ENCODE measurements at regions of chr22 and their contacts with region 1.

Region 1: GRCh38 chr22:25465949-25466348 is 98.5 kb upstream of the GRK3 start:
- DNase-seq: no peak
- ATAC-seq: no peak
- H3K4me3 ChIP-seq: no peak overlapping the region
- H3K4me3 Mint-ChIP-seq: no peak overlapping the region
- H3K27ac ChIP-seq: no peak overlapping the region
- H3K27ac Mint-ChIP-seq: no peak overlapping the region
- H3K4me1 ChIP-seq: no peaks in the 10 kb centered on the region
- H3K4me1 Mint-ChIP-seq: no peaks in the 10 kb centered on the region
- H3K27me3 ChIP-seq: no peaks in the 10 kb centered on the region
- H3K27me3 Mint-ChIP-seq: no peaks in the 10 kb centered on the region
- CTCF ChIP-seq: no peak

Region 2: GRCh38 chr22:25153961-25154666 is 311.8 kb before region 1 on chr22:
- CTCF ChIA-PET with region 1: no interaction called
- POLR2A ChIA-PET with region 1: no interaction called
- intact Hi-C with region 1: no loop called
- DNase-seq: no peak
- ATAC-seq: no peak
- H3K4me3 ChIP-seq: no peak overlapping the region
- H3K4me3 Mint-ChIP-seq: no peak overlapping the region
- H3K27ac ChIP-seq: no peak overlapping the region
- H3K27ac Mint-ChIP-seq: no peak overlapping the region
- H3K4me1 ChIP-seq: no peaks in the 10 kb centered on the region
- H3K4me1 Mint-ChIP-seq: no peaks in the 10 kb centered on the region
- H3K27me3 ChIP-seq: no peaks in the 10 kb centered on the region
- H3K27me3 Mint-ChIP-seq: peaks cover 4% of the 10 kb centered on the region
- CTCF ChIP-seq: no peak

Region 3: DNA sequence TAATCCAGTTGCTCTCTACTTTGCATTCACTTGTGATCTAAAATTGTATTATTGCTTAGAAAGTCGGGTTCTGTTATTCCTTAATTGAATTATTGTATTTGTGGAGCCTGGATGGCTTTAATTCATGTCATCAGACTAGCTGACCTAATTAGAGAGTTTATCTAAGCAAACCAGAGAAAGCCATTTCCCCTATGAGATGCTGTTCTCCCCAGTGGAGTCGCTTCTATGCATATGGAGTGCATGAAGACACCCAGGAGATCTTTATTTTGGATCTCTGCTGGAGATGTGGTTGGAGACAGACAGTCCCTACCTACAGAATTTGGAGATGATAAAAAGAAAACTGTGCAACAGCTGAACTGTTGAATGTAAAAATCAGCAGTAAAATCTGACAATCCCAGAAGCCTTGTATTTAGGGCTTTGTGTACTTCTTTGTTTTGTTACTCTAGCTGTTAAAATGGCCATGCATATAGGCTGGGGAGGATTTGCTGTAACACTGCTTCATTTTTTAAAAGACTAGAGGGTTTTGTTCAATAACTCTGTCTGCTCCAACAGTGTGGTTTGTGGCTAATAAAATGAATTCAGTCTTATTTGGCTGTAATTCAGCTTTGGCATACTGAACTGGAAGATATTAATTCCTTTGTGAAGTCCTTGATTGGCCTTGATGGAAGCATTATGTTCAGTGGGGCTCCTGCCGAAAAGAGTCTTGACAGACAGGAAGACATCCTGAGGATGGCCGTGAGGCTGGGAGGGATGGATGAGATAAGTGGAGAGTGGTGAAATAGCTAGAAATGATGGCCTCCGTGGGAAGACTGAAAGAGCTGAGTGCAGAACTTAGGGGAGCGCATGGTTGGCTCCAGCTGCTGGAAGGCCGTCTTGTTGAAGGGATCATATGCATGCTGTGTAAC is 231.1 kb after region 1 on chr22:
- CTCF ChIA-PET with region 1: interaction called, 51 read pairs
- POLR2A ChIA-PET with region 1: interaction called, 17 read pairs
- intact Hi-C with region 1: no loop called
- DNase-seq: no peak
- ATAC-seq: no peak
- H3K4me3 ChIP-seq: no peak overlapping the region
- H3K4me3 Mint-ChIP-seq: no peak overlapping the region
- H3K27ac ChIP-seq: peak overlapping the region in 1 of 2 donors; percentile 3
- H3K27ac Mint-ChIP-seq: no peak overlapping the region
- H3K4me1 ChIP-seq: no peaks in the 10 kb centered on the region
- H3K4me1 Mint-ChIP-seq: peaks cover 2% of the 10 kb centered on the region
- H3K27me3 ChIP-seq: no peaks in the 10 kb centered on the region
- H3K27me3 Mint-ChIP-seq: no peaks in the 10 kb centered on the region
- CTCF ChIP-seq: no peak

Region 4: DNA sequence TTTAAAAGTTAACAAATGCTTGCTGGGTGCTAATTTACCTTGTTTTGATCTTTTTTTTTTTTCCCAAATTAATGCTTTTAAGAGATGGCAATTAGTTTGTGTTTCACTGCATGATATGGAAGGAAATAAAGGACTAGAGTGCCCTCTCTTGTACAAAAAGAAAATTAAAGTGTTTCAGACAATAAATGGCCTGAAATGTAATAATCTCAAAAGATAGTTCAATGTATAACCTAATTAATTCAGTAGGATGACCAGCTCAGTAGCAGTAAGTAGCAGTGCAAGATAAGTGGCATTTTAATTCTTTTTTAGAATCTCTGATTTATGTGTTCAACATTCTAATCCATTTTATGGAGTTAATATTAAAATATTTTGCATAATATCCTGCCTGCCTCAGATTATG is 236.1 kb after region 1 on chr22:
- CTCF ChIA-PET with region 1: interaction called, 51 read pairs
- POLR2A ChIA-PET with region 1: interaction called, 17 read pairs
- intact Hi-C with region 1: no loop called
- DNase-seq: peak; percentile 42
- ATAC-seq: peak; percentile 36
- H3K4me3 ChIP-seq: no peak overlapping the region
- H3K4me3 Mint-ChIP-seq: no peak overlapping the region
- H3K27ac ChIP-seq: no peak overlapping the region
- H3K27ac Mint-ChIP-seq: no peak overlapping the region
- H3K4me1 ChIP-seq: no peaks in the 10 kb centered on the region
- H3K4me1 Mint-ChIP-seq: peaks cover 7% of the 10 kb centered on the region
- H3K27me3 ChIP-seq: no peaks in the 10 kb centered on the region
- H3K27me3 Mint-ChIP-seq: no peaks in the 10 kb centered on the region
- CTCF ChIP-seq: peak; percentile 70

Region 5: DNA sequence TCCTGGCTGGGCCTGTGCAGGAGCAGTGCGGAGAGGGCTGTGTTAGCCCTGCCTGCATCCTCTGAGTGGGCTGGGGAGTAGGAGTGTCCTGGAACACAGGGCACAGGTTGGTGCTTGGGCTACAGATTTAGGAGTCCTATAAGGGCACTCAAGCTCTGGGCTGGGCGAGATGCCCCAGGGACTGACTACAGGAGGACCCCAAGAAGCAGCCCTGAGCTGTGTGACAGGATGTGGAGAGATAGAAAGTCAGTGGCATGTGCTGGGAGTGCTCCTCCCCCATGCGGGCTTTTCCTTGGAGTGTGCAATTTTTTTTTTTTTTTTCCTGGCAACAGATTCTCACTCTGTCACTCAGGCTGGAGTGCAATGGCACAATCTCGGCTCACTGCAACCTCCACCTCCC is 242.4 kb after region 1 on chr22:
- CTCF ChIA-PET with region 1: interaction called, 51 read pairs
- POLR2A ChIA-PET with region 1: no interaction called
- intact Hi-C with region 1: no loop called
- DNase-seq: no peak
- ATAC-seq: no peak
- H3K4me3 ChIP-seq: no peak overlapping the region
- H3K4me3 Mint-ChIP-seq: no peak overlapping the region
- H3K27ac ChIP-seq: no peak overlapping the region
- H3K27ac Mint-ChIP-seq: peak overlapping the region; percentile 20
- H3K4me1 ChIP-seq: no peaks in the 10 kb centered on the region
- H3K4me1 Mint-ChIP-seq: peaks cover 2% of the 10 kb centered on the region
- H3K27me3 ChIP-seq: no peaks in the 10 kb centered on the region
- H3K27me3 Mint-ChIP-seq: no peaks in the 10 kb centered on the region
- CTCF ChIP-seq: no peak

Region 6: DNA sequence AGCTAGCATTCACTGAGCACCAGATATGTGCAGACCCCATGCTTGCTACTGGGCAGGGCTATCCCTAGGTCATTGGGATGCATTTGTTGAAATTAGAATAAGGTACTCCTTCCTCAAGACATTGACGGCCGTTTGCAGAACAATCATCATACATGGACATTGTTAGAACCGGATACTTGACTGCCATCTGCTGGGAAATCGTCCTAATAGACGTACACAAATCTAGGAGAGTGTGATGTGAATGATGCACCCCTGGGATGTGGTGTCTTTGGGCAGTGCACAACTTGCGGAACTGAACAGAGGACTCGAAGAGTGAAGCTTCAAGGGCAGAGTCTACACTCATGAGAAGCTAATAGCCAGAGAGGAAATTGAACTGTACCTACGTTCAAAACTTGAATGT is 311.9 kb after region 1 on chr22:
- CTCF ChIA-PET with region 1: interaction called, 84 read pairs
- POLR2A ChIA-PET with region 1: no interaction called
- intact Hi-C with region 1: no loop called
- DNase-seq: no peak
- ATAC-seq: no peak
- H3K4me3 ChIP-seq: no peak overlapping the region
- H3K4me3 Mint-ChIP-seq: no peak overlapping the region
- H3K27ac ChIP-seq: no peak overlapping the region
- H3K27ac Mint-ChIP-seq: no peak overlapping the region
- H3K4me1 ChIP-seq: peaks cover under 1 to 3% of the 10 kb centered on the region in 2 donors
- H3K4me1 Mint-ChIP-seq: peaks cover 2% of the 10 kb centered on the region
- H3K27me3 ChIP-seq: no peaks in the 10 kb centered on the region
- H3K27me3 Mint-ChIP-seq: peaks cover 13% of the 10 kb centered on the region
- CTCF ChIP-seq: no peak

Region 7: DNA sequence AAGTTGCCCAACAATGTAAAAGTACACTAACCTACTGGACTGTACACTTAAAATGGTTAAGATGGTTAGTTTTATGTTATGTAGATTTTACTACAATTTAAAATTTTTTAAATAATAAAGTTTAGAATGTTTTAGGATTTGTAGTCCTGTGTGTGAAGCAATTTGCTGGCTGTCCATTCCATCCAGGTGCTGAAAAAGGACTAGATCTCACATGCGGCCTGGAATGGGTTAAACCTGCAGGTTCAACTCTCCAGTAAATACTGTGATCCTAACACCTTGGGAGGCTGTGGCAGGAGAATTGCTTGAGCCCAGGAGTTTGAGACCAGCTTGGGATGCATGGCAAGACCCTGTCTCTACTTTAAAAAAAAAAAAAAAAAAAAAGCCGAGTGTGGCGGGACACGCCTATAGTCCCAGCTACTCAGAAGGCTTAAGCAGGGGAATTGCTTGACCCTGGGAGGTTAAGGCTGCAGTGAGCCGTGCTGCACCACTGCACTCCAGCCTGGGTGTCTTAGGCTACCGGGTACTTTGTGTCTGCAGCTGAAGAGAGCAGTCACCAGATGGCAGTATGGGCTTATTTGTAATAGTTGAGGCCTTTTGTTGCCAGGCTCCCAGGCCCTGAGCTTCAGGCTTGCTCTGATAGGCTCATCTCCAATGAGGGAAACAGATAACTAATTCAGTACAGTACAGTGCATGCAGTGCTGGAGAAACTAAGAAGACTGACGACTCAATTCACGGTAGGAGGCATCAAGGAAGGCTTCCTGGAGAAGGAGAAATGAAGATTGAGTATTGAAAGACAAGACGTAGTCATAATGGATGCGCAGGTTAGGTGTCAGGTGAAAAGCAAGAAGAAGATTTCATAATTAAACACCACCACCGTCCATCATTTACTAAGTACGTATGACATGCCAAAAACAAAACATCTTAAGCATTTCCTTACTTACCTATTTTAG is 898.4 kb after region 1 on chr22:
- CTCF ChIA-PET with region 1: no interaction called
- POLR2A ChIA-PET with region 1: no interaction called
- intact Hi-C with region 1: loop called (anchors 1 kb)
- DNase-seq: peak; percentile 77
- ATAC-seq: peak; percentile 78
- H3K4me3 ChIP-seq: no peak overlapping the region
- H3K4me3 Mint-ChIP-seq: no peak overlapping the region
- H3K27ac ChIP-seq: no peak overlapping the region
- H3K27ac Mint-ChIP-seq: no peak overlapping the region
- H3K4me1 ChIP-seq: peaks cover 4 to 7% of the 10 kb centered on the region in 2 donors
- H3K4me1 Mint-ChIP-seq: peaks cover 3% of the 10 kb centered on the region
- H3K27me3 ChIP-seq: peaks cover 0 to 18% (median 4%) of the 10 kb centered on the region in 4 experiments
- H3K27me3 Mint-ChIP-seq: peaks cover 24% of the 10 kb centered on the region
- CTCF ChIP-seq: peak; percentile 71

Measured in B cell (primary cell).